ENCODE measurements at regions of chr9 and their contacts with region 1.

Region 1: DNA sequence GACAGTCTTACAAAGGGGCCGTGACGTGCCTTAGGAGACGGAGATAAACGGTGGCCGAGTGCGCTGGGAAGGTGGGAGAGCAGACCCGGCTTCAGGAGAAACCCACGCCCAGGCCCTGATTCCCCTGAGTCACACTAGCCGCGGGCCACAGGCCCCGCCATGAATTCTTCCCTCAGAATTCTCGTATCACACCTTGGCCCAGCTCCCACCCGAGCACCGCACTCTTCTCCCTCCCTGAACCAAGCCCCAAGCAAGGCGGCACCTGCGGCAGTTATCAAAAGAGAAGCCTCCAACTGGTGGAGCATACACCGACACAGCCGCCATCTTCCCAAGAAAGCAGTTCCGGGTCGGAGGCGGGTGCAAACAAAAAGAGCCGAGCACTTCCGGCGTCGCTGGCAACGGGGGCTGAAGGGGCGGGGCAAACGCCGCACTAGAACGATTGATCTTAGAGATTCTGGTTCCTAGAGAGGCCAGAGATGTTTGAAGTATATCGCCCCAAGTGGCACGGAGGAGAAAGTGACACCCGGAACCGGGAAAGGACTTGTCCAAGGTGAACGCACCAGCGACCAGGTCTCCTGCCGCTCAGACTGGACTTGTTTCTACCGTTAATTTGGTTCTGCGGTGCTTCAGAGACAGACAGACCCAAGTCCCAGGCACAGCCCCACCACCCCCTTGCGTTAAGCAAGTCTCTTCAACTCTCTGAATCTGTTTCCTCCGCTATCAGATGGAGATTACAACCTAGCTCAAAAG is at the start of gene PSMB7:
- DNase-seq: peak; percentile 99
- ATAC-seq: peak; percentile 95
- H3K4me3 Mint-ChIP-seq: peak within 1 kb of the TSS; percentile 94
- H3K27ac Mint-ChIP-seq: peak within 1 kb of the TSS; percentile 96
- H3K4me1 Mint-ChIP-seq: peaks cover 33% of the 10 kb centered on the region
- H3K27me3 Mint-ChIP-seq: no peaks in the 10 kb centered on the region
- CTCF ChIP-seq: peak; percentile 93
- total RNA-seq, gene PSMB7: 155 to 170 TPM

Region 2: GRCh38 chr9:124392871-124393460 is 22.3 kb before region 1 on chr9:
- CTCF ChIA-PET with region 1: interaction called, 14 read pairs
- POLR2A ChIA-PET with region 1: interaction called, 3 read pairs
- intact Hi-C with region 1: no loop called
- DNase-seq: no peak
- ATAC-seq: no peak
- H3K4me3 Mint-ChIP-seq: no peak overlapping the region
- H3K27ac Mint-ChIP-seq: no peak overlapping the region
- H3K4me1 Mint-ChIP-seq: peaks cover 63% of the 10 kb centered on the region
- H3K27me3 Mint-ChIP-seq: no peaks in the 10 kb centered on the region
- CTCF ChIP-seq: no peak

Region 3: GRCh38 chr9:124399323-124399967 is 15.8 kb before region 1 on chr9:
- CTCF ChIA-PET with region 1: interaction called, 28 read pairs
- POLR2A ChIA-PET with region 1: interaction called, 3 read pairs
- intact Hi-C with region 1: no loop called
- DNase-seq: no peak
- ATAC-seq: no peak
- H3K4me3 Mint-ChIP-seq: no peak overlapping the region
- H3K27ac Mint-ChIP-seq: no peak overlapping the region
- H3K4me1 Mint-ChIP-seq: peaks cover 34% of the 10 kb centered on the region
- H3K27me3 Mint-ChIP-seq: no peaks in the 10 kb centered on the region
- CTCF ChIP-seq: no peak

Region 4: DNA sequence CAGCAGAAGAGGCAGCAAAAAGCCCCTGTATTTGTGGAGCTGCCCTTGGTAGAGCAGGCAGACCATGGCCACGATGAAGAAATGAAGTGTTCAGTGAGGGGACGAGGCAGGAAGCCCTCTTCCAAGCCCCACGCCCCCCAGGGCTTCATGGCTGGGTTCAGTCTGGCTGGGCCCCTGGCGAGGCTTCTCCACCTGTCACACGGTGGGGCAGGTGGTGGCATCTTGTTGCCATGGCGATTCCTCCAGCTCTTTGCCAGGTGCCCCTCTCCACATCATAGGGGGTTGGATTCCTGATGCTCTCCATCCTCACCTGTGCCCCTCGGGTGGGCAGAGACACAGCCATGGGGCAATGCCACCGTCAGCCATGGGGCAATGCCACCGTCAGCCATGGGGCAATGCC is 56.5 kb after region 1 on chr9:
- CTCF ChIA-PET with region 1: no interaction called
- POLR2A ChIA-PET with region 1: no interaction called
- intact Hi-C with region 1: no loop called
- DNase-seq: no peak
- ATAC-seq: no peak
- H3K4me3 Mint-ChIP-seq: no peak overlapping the region
- H3K27ac Mint-ChIP-seq: no peak overlapping the region
- H3K4me1 Mint-ChIP-seq: no peaks in the 10 kb centered on the region
- H3K27me3 Mint-ChIP-seq: peaks cover 3% of the 10 kb centered on the region
- CTCF ChIP-seq: no peak

Region 5: GRCh38 chr9:124532897-124533296 is 117.6 kb after region 1 on chr9:
- CTCF ChIA-PET with region 1: interaction called, 93 read pairs
- POLR2A ChIA-PET with region 1: no interaction called
- intact Hi-C with region 1: loop called (anchors 2 kb)
- DNase-seq: no peak
- ATAC-seq: no peak
- H3K4me3 Mint-ChIP-seq: no peak overlapping the region
- H3K27ac Mint-ChIP-seq: no peak overlapping the region
- H3K4me1 Mint-ChIP-seq: no peaks in the 10 kb centered on the region
- H3K27me3 Mint-ChIP-seq: no peaks in the 10 kb centered on the region
- CTCF ChIP-seq: no peak